Heart right ventricle (tissue), 16 donors: ENCODE measurements at regions of chr2 and their contacts with region 1.

Region 1: GRCh38 chr2:26330113-26330549 is 15.8 kb upstream of the SELENOI start:
- DNase-seq: peak; percentile 80 to 84
- ATAC-seq: peak; percentile 59 to 95 (median 88)
- H3K4me3 ChIP-seq: no peak overlapping the region
- H3K27ac ChIP-seq: no peak overlapping the region
- H3K4me1 ChIP-seq: peaks cover 0 to 10% (median 0%) of the 10 kb centered on the region in 9 donors
- H3K27me3 ChIP-seq: no peaks in the 10 kb centered on the region
- CTCF ChIP-seq: peak; percentile 68 to 92 (median 87)

Region 2: GRCh38 chr2:25951071-25951547 is 379.0 kb before region 1 on chr2:
- intact Hi-C with region 1: loop called in 1 of 10 experiments (anchors 10 kb)
- DNase-seq: peak; percentile 75 to 77
- ATAC-seq: peak; percentile 90 to 97 (median 94)
- H3K4me3 ChIP-seq: peak overlapping the region in 4 of 10 donors; percentile 3 to 27 (median 14)
- H3K27ac ChIP-seq: no peak overlapping the region
- H3K4me1 ChIP-seq: peaks cover 0 to 18% (median 7%) of the 10 kb centered on the region in 9 donors
- H3K27me3 ChIP-seq: no peaks in the 10 kb centered on the region
- CTCF ChIP-seq: peak; percentile 76 to 98 (median 95)

Region 3: DNA sequence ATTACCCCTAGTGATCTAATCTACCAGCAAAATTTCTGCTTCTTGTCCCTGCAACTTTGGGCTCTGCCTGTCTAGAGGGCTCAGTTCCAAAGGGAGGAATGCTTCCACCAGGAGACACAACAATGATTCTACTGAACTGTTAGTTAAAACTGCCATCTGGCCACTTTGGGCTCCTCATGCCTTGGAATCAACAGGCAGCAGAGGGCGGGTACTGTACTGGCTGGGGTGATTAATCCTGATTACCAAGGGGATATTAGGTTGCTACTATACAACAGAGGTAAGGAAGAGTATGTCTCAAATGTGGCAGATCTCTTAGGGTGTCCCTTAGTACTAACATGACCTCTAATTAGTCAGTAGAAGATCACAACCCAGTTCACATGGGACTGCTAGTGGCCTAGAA is 107.1 kb before region 1 on chr2:
- intact Hi-C with region 1: loop called in 1 of 10 experiments (anchors 5 kb)
- DNase-seq: no peak
- ATAC-seq: peak in 2 of 8 donors; percentile 34 to 37
- H3K4me3 ChIP-seq: no peak overlapping the region
- H3K27ac ChIP-seq: peak overlapping the region in 1 of 10 donors; percentile 25
- H3K4me1 ChIP-seq: peaks cover 0 to 4% (median 0%) of the 10 kb centered on the region in 9 donors
- H3K27me3 ChIP-seq: no peaks in the 10 kb centered on the region
- CTCF ChIP-seq: no peak

Region 4: DNA sequence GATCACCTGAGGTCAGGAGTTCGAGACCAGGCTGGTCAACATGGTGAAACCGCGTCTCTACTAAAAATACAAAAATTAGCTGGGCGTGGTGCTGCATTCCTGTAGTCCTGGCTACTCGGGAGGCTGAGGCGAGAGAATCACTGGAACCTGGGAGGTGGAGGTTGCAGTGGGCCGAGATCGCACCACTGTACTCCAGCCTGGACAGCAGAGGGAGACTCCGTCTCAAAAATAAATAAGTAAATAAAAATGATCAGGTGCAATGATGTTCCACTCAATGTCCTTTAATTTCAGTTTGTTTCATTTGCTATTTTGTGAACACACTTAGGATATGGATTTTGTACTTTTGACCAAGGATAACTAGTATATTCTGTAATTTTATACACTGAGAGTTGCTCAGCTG is 95.0 kb before region 1 on chr2:
- intact Hi-C with region 1: loop called in 7 of 10 experiments (anchors 5 to 10 kb)
- DNase-seq: no peak
- ATAC-seq: no peak
- H3K4me3 ChIP-seq: no peak overlapping the region
- H3K27ac ChIP-seq: no peak overlapping the region
- H3K4me1 ChIP-seq: peaks cover 0 to 30% (median 22%) of the 10 kb centered on the region in 9 donors
- H3K27me3 ChIP-seq: no peaks in the 10 kb centered on the region
- CTCF ChIP-seq: peak in 6 of 9 donors; percentile 28 to 44 (median 40)

Region 5: GRCh38 chr2:26244309-26245121 is 85.6 kb before region 1 on chr2 and contains the starts of genes HADHA and HADHB:
- intact Hi-C with region 1: loop called in 8 of 10 experiments (anchors 5 to 10 kb)
- DNase-seq: peak; percentile 90
- ATAC-seq: peak; percentile 92 to 97 (median 95)
- H3K4me3 ChIP-seq: peak within 1 kb of the TSS; percentile 58 to 97 (median 82)
- H3K27ac ChIP-seq: peak within 1 kb of the TSS; percentile 93 to 99 (median 98)
- H3K4me1 ChIP-seq: peaks cover 4 to 79% (median 67%) of the 10 kb centered on the region in 9 donors
- H3K27me3 ChIP-seq: no peaks in the 10 kb centered on the region
- CTCF ChIP-seq: peak in 5 of 9 donors; percentile 8 to 52 (median 47)
- total RNA-seq, gene HADHA: 298 to 686 (median 410) TPM
- total RNA-seq, gene HADHB: 740 to 1,542 (median 874) TPM